ENCODE measurements at regions of chr5 and their contacts with region 1.

Region 1: GRCh38 chr5:154520861-154521453 is 42.9 kb upstream of the HAND1 start:
- DNase-seq: no peak
- ATAC-seq: peak; percentile 42
- H3K4me3 ChIP-seq: no peak overlapping the region
- H3K27ac ChIP-seq: no peak overlapping the region
- H3K4me1 ChIP-seq: 0 out of 2 replicates have a peak, but pooled peaks cover 4% of the 10 kb centered on the region
- H3K27me3 ChIP-seq: peaks cover 0 to 2% of the 10 kb centered on the region in 2 experiments; a peak in 1 of 4 replicates
- CTCF ChIP-seq: peak; percentile 64 to 87 (median 74)
- EP300 ChIP-seq: no peak
- POLR2A ChIP-seq: no peak
- RAD21 ChIP-seq: peak; percentile 43

Region 2: GRCh38 chr5:154487541-154487940 is 33.4 kb before region 1 on chr5:
- CTCF ChIA-PET with region 1: interaction called, 13 read pairs
- POLR2A ChIA-PET with region 1: no interaction called
- RAD21 ChIA-PET with region 1: no interaction called
- SMC1A ChIA-PET with region 1: interaction called, 4 read pairs
- in situ Hi-C with region 1: no loop called
- intact Hi-C with region 1: no loop called
- DNase-seq: peak; percentile 60
- ATAC-seq: peak; percentile 99
- H3K4me3 ChIP-seq: no peak overlapping the region
- H3K27ac ChIP-seq: no peak overlapping the region
- H3K4me1 ChIP-seq: peaks cover 22% of the 10 kb centered on the region
- H3K27me3 ChIP-seq: peaks cover 12 to 20% of the 10 kb centered on the region in 2 experiments
- CTCF ChIP-seq: no peak
- EP300 ChIP-seq: peak in 1 of 2 experiments; percentile 78; a peak in 1 of 4 replicates
- POLR2A ChIP-seq: no peak
- RAD21 ChIP-seq: no peak

Region 3: GRCh38 chr5:154498591-154498990 is 22.4 kb before region 1 on chr5:
- CTCF ChIA-PET with region 1: interaction called, 39 read pairs
- POLR2A ChIA-PET with region 1: no interaction called
- RAD21 ChIA-PET with region 1: interaction called, 62 read pairs
- SMC1A ChIA-PET with region 1: interaction called, 108 read pairs
- in situ Hi-C with region 1: no loop called
- intact Hi-C with region 1: no loop called
- DNase-seq: no peak
- ATAC-seq: no peak
- H3K4me3 ChIP-seq: no peak overlapping the region
- H3K27ac ChIP-seq: no peak overlapping the region
- H3K4me1 ChIP-seq: peaks cover 29% of the 10 kb centered on the region
- H3K27me3 ChIP-seq: no peaks in the 10 kb centered on the region
- CTCF ChIP-seq: no peak
- EP300 ChIP-seq: no peak
- POLR2A ChIP-seq: no peak
- RAD21 ChIP-seq: no peak

Region 4: GRCh38 chr5:154534457-154535050 is 13.6 kb after region 1 on chr5:
- CTCF ChIA-PET with region 1: interaction called, 12 read pairs
- POLR2A ChIA-PET with region 1: no interaction called
- RAD21 ChIA-PET with region 1: no interaction called
- SMC1A ChIA-PET with region 1: interaction called, 4 read pairs
- in situ Hi-C with region 1: no loop called
- intact Hi-C with region 1: no loop called
- DNase-seq: no peak
- ATAC-seq: no peak
- H3K4me3 ChIP-seq: no peak overlapping the region
- H3K27ac ChIP-seq: no peak overlapping the region
- H3K4me1 ChIP-seq: no peaks in the 10 kb centered on the region
- H3K27me3 ChIP-seq: no peaks in the 10 kb centered on the region; a peak in 1 of 4 replicates
- CTCF ChIP-seq: no peak
- EP300 ChIP-seq: no peak
- POLR2A ChIP-seq: no peak
- RAD21 ChIP-seq: no peak

Region 5: DNA sequence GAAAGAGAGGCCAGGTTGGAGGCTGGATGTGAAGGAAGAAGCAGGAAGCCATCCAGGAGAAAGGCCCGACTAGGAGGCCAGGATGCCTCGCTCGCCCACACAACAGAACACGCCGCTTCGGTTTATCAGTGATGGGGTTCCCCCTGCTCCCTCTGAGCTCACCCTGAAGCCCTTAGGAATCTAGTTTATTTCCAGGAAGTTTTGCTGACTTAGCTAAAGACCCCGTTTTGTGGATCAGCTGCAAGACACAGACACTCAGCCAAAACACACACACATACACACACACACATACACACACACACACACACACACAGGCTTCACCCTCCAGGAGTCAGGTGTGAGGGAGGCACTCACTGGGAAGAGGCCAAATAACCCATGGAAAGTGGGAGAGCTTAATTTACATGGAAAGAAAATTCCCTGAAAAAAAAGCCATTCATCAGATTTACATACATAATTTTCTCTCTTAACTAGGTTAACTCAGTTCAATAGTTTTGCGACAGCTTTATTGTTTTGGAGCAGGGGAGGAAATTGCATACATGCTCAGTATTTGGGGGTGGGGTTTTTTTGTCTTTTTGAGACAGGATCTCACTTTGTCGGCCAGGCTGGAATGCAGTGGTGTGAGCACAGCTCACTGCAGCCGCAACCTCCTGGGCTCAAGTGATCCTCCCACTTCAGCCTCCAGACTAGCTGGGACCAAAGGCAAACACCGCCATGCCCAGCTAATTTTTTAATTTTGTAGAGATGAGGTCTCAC is 49.8 kb after region 1 on chr5:
- CTCF ChIA-PET with region 1: interaction called, 79 read pairs
- POLR2A ChIA-PET with region 1: interaction called, 3 read pairs
- RAD21 ChIA-PET with region 1: interaction called, 26 read pairs
- SMC1A ChIA-PET with region 1: interaction called, 16 read pairs
- in situ Hi-C with region 1: no loop called
- intact Hi-C with region 1: loop called (anchors 5 kb)
- DNase-seq: no peak
- ATAC-seq: no peak
- H3K4me3 ChIP-seq: no peak overlapping the region
- H3K27ac ChIP-seq: no peak overlapping the region
- H3K4me1 ChIP-seq: peaks cover 6% of the 10 kb centered on the region
- H3K27me3 ChIP-seq: no peaks in the 10 kb centered on the region
- CTCF ChIP-seq: no peak
- EP300 ChIP-seq: no peak
- POLR2A ChIP-seq: no peak
- RAD21 ChIP-seq: no peak

Region 6: GRCh38 chr5:154610321-154611154 is 89.6 kb after region 1 on chr5:
- CTCF ChIA-PET with region 1: interaction called, 11 read pairs
- POLR2A ChIA-PET with region 1: no interaction called
- RAD21 ChIA-PET with region 1: interaction called, 3 read pairs
- SMC1A ChIA-PET with region 1: interaction called, 4 read pairs
- in situ Hi-C with region 1: no loop called
- intact Hi-C with region 1: loop called (anchors 5 kb)
- DNase-seq: peak; percentile 27
- ATAC-seq: peak; percentile 98
- H3K4me3 ChIP-seq: peak overlapping the region; percentile 72; the same call in 1 of the 2 replicates
- H3K27ac ChIP-seq: no peak overlapping the region
- H3K4me1 ChIP-seq: peaks cover 12% of the 10 kb centered on the region
- H3K27me3 ChIP-seq: peaks cover 4 to 7% of the 10 kb centered on the region in 2 experiments; a peak in 3 of 4 replicates
- CTCF ChIP-seq: peak; percentile 91 to 99 (median 96); a peak in 5 of 6 replicates
- EP300 ChIP-seq: no peak
- POLR2A ChIP-seq: no peak
- RAD21 ChIP-seq: peak; percentile 99

Measured in GM12878 (cell line).